H1 (cell line): ENCODE measurements at regions of chrX and their contacts with region 1.

Region 1: DNA sequence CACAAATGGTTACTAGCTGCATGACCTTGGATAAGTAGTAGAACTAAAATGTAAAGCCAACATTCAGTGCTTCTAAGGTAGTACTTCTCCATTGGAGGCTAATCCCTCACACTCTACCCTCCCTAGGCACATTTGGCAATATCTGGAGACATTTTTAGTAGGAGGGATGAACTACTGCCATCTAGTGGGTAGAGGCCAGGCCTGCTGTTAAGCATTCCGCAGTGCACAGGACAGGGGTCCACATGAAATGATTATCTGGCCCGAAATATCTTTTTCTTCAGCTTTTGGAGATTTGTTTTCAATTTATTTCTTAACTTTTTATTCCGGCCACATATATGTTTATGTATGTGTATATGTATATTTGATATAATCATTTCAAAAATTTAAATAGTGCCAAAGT is 36.0 kb upstream of the SPANXC start:
- DNase-seq: peak in 1 of 2 experiments; percentile 41
- H3K4me3 ChIP-seq: no peak overlapping the region
- H3K27ac ChIP-seq: no peak overlapping the region
- H3K4me1 ChIP-seq: no peaks in the 10 kb centered on the region
- H3K27me3 ChIP-seq: no peaks in the 10 kb centered on the region
- CTCF ChIP-seq: peak; percentile 45 to 65 (median 50)
- EP300 ChIP-seq: no peak
- POLR2A ChIP-seq: no peak
- RAD21 ChIP-seq: peak; percentile 76 to 80

Region 2: GRCh38 chrX:140766024-140766611 is 512.2 kb before region 1 on chrX:
- CTCF ChIA-PET with region 1: interaction called, 17 read pairs
- POLR2A ChIA-PET with region 1: no interaction called
- DNase-seq: peak in 1 of 2 experiments; percentile 53
- H3K4me3 ChIP-seq: peak overlapping the region; percentile 26 to 79 (median 55); a peak in 7 of 8 replicates
- H3K27ac ChIP-seq: no peak overlapping the region
- H3K4me1 ChIP-seq: peaks cover 0 to 2% (median 0%) of the 10 kb centered on the region in 4 experiments; a peak in 1 of 7 replicates
- H3K27me3 ChIP-seq: peaks cover 0 to 9% (median 2%) of the 10 kb centered on the region in 4 experiments; a peak in 3 of 7 replicates
- CTCF ChIP-seq: peak; percentile 49 to 56 (median 50)
- EP300 ChIP-seq: no peak
- POLR2A ChIP-seq: no peak
- RAD21 ChIP-seq: peak; percentile 74 to 76

Region 3: GRCh38 chrX:141258080-141258479 is 20.2 kb before region 1 on chrX:
- CTCF ChIA-PET with region 1: no interaction called
- POLR2A ChIA-PET with region 1: no interaction called
- DNase-seq: no peak
- H3K4me3 ChIP-seq: no peak overlapping the region
- H3K27ac ChIP-seq: no peak overlapping the region
- H3K4me1 ChIP-seq: no peaks in the 10 kb centered on the region
- H3K27me3 ChIP-seq: no peaks in the 10 kb centered on the region
- CTCF ChIP-seq: no peak
- EP300 ChIP-seq: no peak
- POLR2A ChIP-seq: no peak
- RAD21 ChIP-seq: no peak